ENCODE measurements at regions of chr18 and their contacts with region 1.

Region 1: GRCh38 chr18:31424383-31424988 is 23.1 kb upstream of the DSG3 start:
- DNase-seq: no peak
- ATAC-seq: peak; percentile 89
- H3K4me3 ChIP-seq: no peak overlapping the region
- H3K27ac ChIP-seq: no peak overlapping the region
- H3K4me1 ChIP-seq: no peaks in the 10 kb centered on the region
- H3K27me3 ChIP-seq: no peaks in the 10 kb centered on the region
- CTCF ChIP-seq: peak; percentile 78 to 86 (median 80)
- EP300 ChIP-seq: no peak
- POLR2A ChIP-seq: no peak
- RAD21 ChIP-seq: peak; percentile 94

Region 2: GRCh38 chr18:31343454-31343853 is 81.0 kb before region 1 on chr18:
- CTCF ChIA-PET with region 1: no interaction called
- POLR2A ChIA-PET with region 1: no interaction called
- RAD21 ChIA-PET with region 1: no interaction called
- SMC1A ChIA-PET with region 1: no interaction called
- in situ Hi-C with region 1: no loop called
- intact Hi-C with region 1: no loop called
- DNase-seq: no peak
- ATAC-seq: no peak
- H3K4me3 ChIP-seq: no peak overlapping the region
- H3K27ac ChIP-seq: no peak overlapping the region
- H3K4me1 ChIP-seq: no peaks in the 10 kb centered on the region
- H3K27me3 ChIP-seq: no peaks in the 10 kb centered on the region
- CTCF ChIP-seq: no peak
- EP300 ChIP-seq: no peak
- POLR2A ChIP-seq: no peak
- RAD21 ChIP-seq: no peak

Region 3: DNA sequence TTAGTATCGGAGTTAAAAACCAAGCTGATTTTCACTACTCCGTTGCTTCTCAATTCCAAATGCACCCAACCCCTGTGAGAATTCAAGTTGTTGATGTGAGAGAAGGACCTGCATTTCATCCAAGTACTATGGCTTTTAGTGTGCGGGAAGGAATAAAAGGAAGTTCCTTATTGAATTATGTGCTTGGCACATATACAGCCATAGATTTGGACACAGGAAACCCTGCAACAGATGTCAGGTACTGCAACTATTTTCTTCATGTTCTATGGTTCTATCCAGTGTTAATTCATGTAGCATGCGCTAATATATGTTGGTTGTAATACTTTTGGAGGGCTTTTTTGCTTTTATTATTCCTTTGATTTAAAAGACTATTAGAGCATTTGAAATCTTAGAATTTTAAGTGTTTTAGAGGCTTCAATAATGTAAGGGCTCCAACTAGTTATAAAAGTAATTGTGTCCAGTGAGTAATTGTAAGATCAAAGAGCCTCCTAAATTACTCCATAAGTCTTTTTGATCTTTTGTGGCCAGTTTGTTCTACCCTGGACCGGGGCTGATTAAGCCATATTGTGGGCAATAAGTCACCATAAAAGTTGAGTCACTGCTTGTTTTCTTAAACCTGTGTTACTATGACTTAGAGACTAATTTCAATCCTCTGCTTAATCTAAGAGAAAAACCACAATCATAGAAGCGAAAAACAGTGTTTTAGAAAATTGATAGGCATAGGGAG is 25.0 kb before region 1 on chr18:
- CTCF ChIA-PET with region 1: interaction called, 10 read pairs
- POLR2A ChIA-PET with region 1: no interaction called
- RAD21 ChIA-PET with region 1: no interaction called
- SMC1A ChIA-PET with region 1: no interaction called
- in situ Hi-C with region 1: no loop called
- intact Hi-C with region 1: no loop called
- DNase-seq: no peak
- ATAC-seq: no peak
- H3K4me3 ChIP-seq: no peak overlapping the region
- H3K27ac ChIP-seq: no peak overlapping the region
- H3K4me1 ChIP-seq: no peaks in the 10 kb centered on the region
- H3K27me3 ChIP-seq: no peaks in the 10 kb centered on the region
- CTCF ChIP-seq: no peak
- EP300 ChIP-seq: no peak
- POLR2A ChIP-seq: no peak
- RAD21 ChIP-seq: no peak

Region 4: DNA sequence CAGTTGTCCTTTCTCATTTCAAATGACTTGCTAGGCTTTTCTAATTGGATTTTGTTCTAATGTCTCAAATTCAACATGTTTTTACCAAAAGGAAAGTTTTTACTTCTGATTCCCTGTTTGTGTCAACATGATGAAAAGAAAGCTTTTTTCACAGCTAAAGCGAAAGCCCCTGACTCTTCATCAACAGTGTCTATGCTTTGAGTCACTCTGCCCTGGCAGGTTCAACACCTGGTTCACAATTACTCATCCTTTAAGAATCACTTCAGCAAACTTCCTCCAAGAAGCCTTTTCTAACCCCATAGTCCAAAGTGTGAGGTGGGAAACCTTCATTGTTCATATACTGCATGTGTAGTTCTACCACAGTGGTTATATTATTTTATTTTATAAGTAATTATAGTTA is 65.9 kb after region 1 on chr18:
- CTCF ChIA-PET with region 1: interaction called, 7 read pairs
- POLR2A ChIA-PET with region 1: no interaction called
- RAD21 ChIA-PET with region 1: interaction called, 4 read pairs
- SMC1A ChIA-PET with region 1: interaction called, 10 read pairs
- in situ Hi-C with region 1: no loop called
- intact Hi-C with region 1: no loop called
- DNase-seq: peak; percentile 49
- ATAC-seq: peak; percentile 92
- H3K4me3 ChIP-seq: no peak overlapping the region
- H3K27ac ChIP-seq: peak overlapping the region; percentile 9; the same call in 1 of the 2 replicates
- H3K4me1 ChIP-seq: peaks cover 7% of the 10 kb centered on the region
- H3K27me3 ChIP-seq: no peaks in the 10 kb centered on the region
- CTCF ChIP-seq: no peak
- EP300 ChIP-seq: peak; percentile 69 to 85; a peak in 3 of 4 replicates
- POLR2A ChIP-seq: no peak
- RAD21 ChIP-seq: no peak

Region 5: DNA sequence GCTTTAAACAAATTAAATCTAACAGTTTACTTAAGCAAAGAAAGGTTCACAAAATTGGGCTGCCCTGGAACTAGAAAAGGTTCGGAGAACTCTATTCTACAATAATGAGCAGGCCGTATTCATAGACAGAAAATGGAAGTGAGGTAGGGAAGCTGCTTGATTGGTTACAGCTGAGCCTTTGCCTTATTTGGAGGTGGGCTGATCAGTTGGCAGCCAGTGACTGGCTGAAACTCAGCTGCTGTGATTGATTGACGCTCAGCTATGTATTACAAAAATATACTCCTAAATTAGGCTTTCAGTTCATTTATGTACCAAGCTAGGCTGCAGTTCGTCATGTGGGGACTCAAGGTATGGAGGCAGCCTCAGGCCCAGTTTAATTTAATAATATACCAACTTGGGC is 124.9 kb after region 1 on chr18:
- CTCF ChIA-PET with region 1: interaction called, 43 read pairs
- POLR2A ChIA-PET with region 1: no interaction called
- RAD21 ChIA-PET with region 1: interaction called, 11 read pairs
- SMC1A ChIA-PET with region 1: interaction called, 53 read pairs
- in situ Hi-C with region 1: loop called (anchors 10 kb)
- intact Hi-C with region 1: no loop called
- DNase-seq: no peak
- ATAC-seq: peak; percentile 51
- H3K4me3 ChIP-seq: no peak overlapping the region
- H3K27ac ChIP-seq: no peak overlapping the region
- H3K4me1 ChIP-seq: no peaks in the 10 kb centered on the region
- H3K27me3 ChIP-seq: no peaks in the 10 kb centered on the region
- CTCF ChIP-seq: no peak
- EP300 ChIP-seq: no peak
- POLR2A ChIP-seq: no peak
- RAD21 ChIP-seq: no peak

Region 6: DNA sequence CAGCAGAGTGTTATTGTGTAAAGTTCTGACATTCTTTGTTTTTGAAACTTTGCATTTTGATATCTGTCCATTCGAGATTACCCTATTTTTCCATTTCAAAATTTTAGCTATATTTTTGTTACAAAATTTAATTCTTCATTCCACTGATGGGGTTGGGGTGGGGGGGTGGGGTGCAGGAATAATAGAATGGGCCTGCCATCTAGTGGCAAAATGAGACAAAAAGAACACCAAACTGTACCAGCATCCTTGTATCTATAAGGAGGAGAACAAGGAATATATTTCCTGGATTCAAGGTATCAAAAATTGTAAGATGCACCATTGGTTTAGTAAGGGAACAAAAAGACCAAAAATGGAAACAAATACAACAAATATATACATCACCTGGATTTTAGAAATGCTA is 139.3 kb after region 1 on chr18:
- CTCF ChIA-PET with region 1: interaction called, 39 read pairs
- POLR2A ChIA-PET with region 1: no interaction called
- RAD21 ChIA-PET with region 1: interaction called, 18 read pairs
- SMC1A ChIA-PET with region 1: interaction called, 53 read pairs
- in situ Hi-C with region 1: loop called (anchors 10 kb)
- intact Hi-C with region 1: no loop called
- DNase-seq: no peak
- ATAC-seq: 0 out of 3 replicates have a peak, but pooled peaks have one; percentile 45
- H3K4me3 ChIP-seq: no peak overlapping the region
- H3K27ac ChIP-seq: no peak overlapping the region
- H3K4me1 ChIP-seq: no peaks in the 10 kb centered on the region
- H3K27me3 ChIP-seq: no peaks in the 10 kb centered on the region
- CTCF ChIP-seq: peak in 2 of 3 experiments; percentile 19 to 28; a peak in 2 of 6 replicates
- EP300 ChIP-seq: no peak
- POLR2A ChIP-seq: no peak
- RAD21 ChIP-seq: peak; percentile 44

Region 7: DNA sequence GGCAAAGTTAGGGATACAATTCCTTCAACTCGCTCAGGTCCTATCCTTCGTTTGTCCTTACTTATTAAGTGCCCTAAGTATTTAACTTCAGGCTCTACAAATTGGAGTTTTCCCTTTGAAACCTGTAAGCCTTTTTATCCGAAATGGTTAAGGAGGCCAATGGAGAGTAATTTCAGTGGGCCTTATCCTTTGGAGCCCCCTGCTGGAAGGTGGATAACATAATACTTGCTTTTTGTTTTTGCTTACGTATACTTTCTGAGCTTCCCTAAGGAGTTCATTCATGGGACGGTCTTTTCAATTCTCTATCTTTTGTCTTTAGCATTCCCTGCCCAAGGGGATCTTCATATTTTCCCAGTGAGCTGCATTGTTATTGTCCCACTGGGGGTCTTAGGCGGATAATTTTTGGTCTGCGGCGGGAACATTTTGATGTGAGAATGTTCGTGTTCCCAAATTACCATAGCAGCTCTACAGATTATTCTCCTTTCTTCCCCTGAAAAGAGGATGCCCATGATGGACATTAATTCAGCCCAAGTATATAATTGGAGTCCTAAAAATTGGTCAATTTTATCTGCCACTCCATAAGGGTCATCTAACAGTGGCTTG is 552.9 kb after region 1 on chr18:
- CTCF ChIA-PET with region 1: interaction called, 5 read pairs
- POLR2A ChIA-PET with region 1: no interaction called
- RAD21 ChIA-PET with region 1: no interaction called
- SMC1A ChIA-PET with region 1: interaction called, 4 read pairs
- in situ Hi-C with region 1: no loop called
- intact Hi-C with region 1: loop called (anchors 10 kb)
- DNase-seq: no peak
- ATAC-seq: peak; percentile 80
- H3K4me3 ChIP-seq: no peak overlapping the region
- H3K27ac ChIP-seq: no peak overlapping the region
- H3K4me1 ChIP-seq: no peaks in the 10 kb centered on the region
- H3K27me3 ChIP-seq: no peaks in the 10 kb centered on the region
- CTCF ChIP-seq: peak; percentile 49 to 65 (median 50); a peak in 5 of 6 replicates
- EP300 ChIP-seq: no peak
- POLR2A ChIP-seq: no peak
- RAD21 ChIP-seq: peak; percentile 74

Region 8: GRCh38 chr18:32612301-32613048 is 1188.0 kb after region 1 on chr18:
- CTCF ChIA-PET with region 1: no interaction called
- POLR2A ChIA-PET with region 1: no interaction called
- RAD21 ChIA-PET with region 1: no interaction called
- SMC1A ChIA-PET with region 1: no interaction called
- in situ Hi-C with region 1: no loop called
- intact Hi-C with region 1: no loop called
- DNase-seq: no peak
- ATAC-seq: no peak
- H3K4me3 ChIP-seq: no peak overlapping the region
- H3K27ac ChIP-seq: no peak overlapping the region
- H3K4me1 ChIP-seq: no peaks in the 10 kb centered on the region
- H3K27me3 ChIP-seq: no peaks in the 10 kb centered on the region
- CTCF ChIP-seq: no peak
- EP300 ChIP-seq: no peak
- POLR2A ChIP-seq: no peak
- RAD21 ChIP-seq: no peak